ENCODE measurements at regions of chr1 and their contacts with region 1.

Region 1: GRCh38 chr1:162605225-162605927 is 26.9 kb upstream of the DDR2 start:
- DNase-seq: no peak
- H3K4me3 ChIP-seq: no peak overlapping the region
- H3K27ac ChIP-seq: peak overlapping the region in 2 of 4 donors; percentile 8 to 10
- H3K4me1 ChIP-seq: no peaks in the 10 kb centered on the region
- H3K27me3 ChIP-seq: no peaks in the 10 kb centered on the region
- CTCF ChIP-seq: no peak
- EP300 ChIP-seq: peak; percentile 13
- POLR2A ChIP-seq: no peak

Region 2: DNA sequence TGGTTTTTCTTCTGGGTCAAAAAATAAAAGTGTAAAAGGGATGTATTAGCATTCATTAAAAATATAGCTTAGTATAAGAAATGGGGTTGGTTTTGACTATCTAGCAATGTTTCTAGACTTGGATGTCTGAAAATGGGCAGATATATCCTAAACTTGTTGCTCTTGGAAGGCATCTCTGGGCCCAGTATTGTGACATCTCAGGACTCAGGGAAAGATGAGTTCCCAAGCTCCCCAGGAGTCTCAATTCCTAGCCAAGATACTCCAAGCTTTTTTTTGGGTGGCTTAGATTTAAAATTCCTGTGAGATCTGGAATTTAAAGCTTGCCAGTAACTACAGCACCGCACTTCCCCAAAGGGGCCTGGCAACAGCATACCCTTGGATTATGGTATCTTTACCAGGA is 173.7 kb after region 1 on chr1:
- in situ Hi-C with region 1: loop called in 2 of 4 experiments (anchors 25 kb)
- intact Hi-C with region 1: no loop called
- DNase-seq: no peak
- H3K4me3 ChIP-seq: no peak overlapping the region
- H3K27ac ChIP-seq: no peak overlapping the region
- H3K4me1 ChIP-seq: no peaks in the 10 kb centered on the region
- H3K27me3 ChIP-seq: no peaks in the 10 kb centered on the region
- CTCF ChIP-seq: no peak
- EP300 ChIP-seq: no peak
- POLR2A ChIP-seq: no peak

Measured in transverse colon (tissue), 4 donors.